Activated T-helper 2 cell treated with anti-CD3 and anti-CD28 coated beads, Interferon-gamma antibody, Interleukin-2, Interleukin-4, amounts not matched to agents 10 μg/mL and 5 μg/mL and 100 μg/mL, durations not matched to agents 14 hours and 24 hours and 36 hours (primary cell): ENCODE measurements at regions of chrX and their contacts with region 1.

Region 1: GRCh38 chrX:49155900-49156837 is 6.4 kb upstream of the MAGIX start:
- DNase-seq: peak; percentile 82
- H3K4me3 Mint-ChIP-seq: peak overlapping the region; percentile 83
- H3K27ac Mint-ChIP-seq: peak overlapping the region; percentile 92
- H3K4me1 Mint-ChIP-seq: peaks cover 11% of the 10 kb centered on the region
- H3K27me3 Mint-ChIP-seq: no peaks in the 10 kb centered on the region

Region 2: GRCh38 chrX:49120099-49120498 is 36.1 kb before region 1 on chrX:
- intact Hi-C with region 1: loop called (anchors 1 kb)
- DNase-seq: no peak
- H3K4me3 Mint-ChIP-seq: peak overlapping the region; percentile 11
- H3K27ac Mint-ChIP-seq: peak overlapping the region; percentile 50
- H3K4me1 Mint-ChIP-seq: peaks cover 32% of the 10 kb centered on the region
- H3K27me3 Mint-ChIP-seq: no peaks in the 10 kb centered on the region

Region 3: GRCh38 chrX:49725923-49726904 is 570.0 kb after region 1 on chrX:
- intact Hi-C with region 1: no loop called
- DNase-seq: no peak
- H3K4me3 Mint-ChIP-seq: no peak overlapping the region
- H3K27ac Mint-ChIP-seq: no peak overlapping the region
- H3K4me1 Mint-ChIP-seq: no peaks in the 10 kb centered on the region
- H3K27me3 Mint-ChIP-seq: no peaks in the 10 kb centered on the region